Gastrocnemius medialis (tissue), 4 donors: ENCODE measurements at regions of chr7 and their contacts with region 1.

Region 1: GRCh38 chr7:48109848-48110663 is 21.0 kb downstream of the UPP1 start:
- DNase-seq: peak; percentile 42 to 64
- ATAC-seq: peak; percentile 77 to 83
- H3K4me3 ChIP-seq: no peak overlapping the region
- H3K27ac ChIP-seq: no peak overlapping the region
- H3K4me1 ChIP-seq: no peaks in the 10 kb centered on the region
- H3K27me3 ChIP-seq: no peaks in the 10 kb centered on the region
- CTCF ChIP-seq: peak; percentile 90 to 100 (median 95)
- POLR2A ChIP-seq: no peak

Region 2: DNA sequence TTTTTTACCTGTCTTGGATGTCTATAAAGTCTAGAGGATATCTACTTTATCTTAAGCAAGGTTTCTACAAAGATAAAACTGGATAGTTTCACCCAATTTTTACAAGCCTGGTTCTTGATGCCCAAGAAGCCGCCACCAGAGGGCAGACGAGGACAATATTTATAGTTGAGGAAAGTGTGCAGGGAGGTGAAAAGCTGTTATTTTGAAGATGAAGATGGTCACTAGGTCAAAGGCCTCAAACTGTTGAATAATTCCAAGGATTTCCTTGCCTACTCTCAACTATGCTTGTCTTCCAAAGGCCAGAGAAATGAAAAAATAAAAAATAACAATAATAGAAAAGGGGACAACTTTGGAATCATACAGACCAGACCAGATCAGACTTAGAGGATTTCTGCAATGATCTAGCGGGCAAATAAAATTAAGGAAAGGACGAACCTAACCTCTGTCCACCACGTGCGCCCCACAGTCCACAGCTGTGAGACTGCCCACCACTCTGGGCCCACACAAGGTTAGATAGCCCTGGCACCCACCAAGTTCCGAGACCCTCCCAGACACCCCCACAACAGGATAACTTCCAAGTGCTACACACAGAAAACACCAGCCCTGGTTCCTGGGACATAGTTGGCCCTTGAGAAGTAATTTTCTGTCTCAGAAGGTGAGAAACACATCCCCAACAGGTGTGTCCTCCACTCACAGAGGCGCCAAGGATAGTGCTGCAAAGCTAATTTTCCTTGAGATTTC is 164.6 kb before region 1 on chr7:
- in situ Hi-C with region 1: loop called (anchors 5 to 10 kb)
- intact Hi-C with region 1: loop called (anchors 1 kb)
- DNase-seq: peak; percentile 42 to 45
- ATAC-seq: peak in 1 of 2 donors; percentile 49
- H3K4me3 ChIP-seq: no peak overlapping the region
- H3K27ac ChIP-seq: peak overlapping the region; percentile 36 to 68 (median 58)
- H3K4me1 ChIP-seq: peaks cover 0 to 2% of the 10 kb centered on the region in 2 donors
- H3K27me3 ChIP-seq: no peaks in the 10 kb centered on the region
- CTCF ChIP-seq: peak; percentile 48 to 79 (median 64)
- POLR2A ChIP-seq: no peak

Region 3: DNA sequence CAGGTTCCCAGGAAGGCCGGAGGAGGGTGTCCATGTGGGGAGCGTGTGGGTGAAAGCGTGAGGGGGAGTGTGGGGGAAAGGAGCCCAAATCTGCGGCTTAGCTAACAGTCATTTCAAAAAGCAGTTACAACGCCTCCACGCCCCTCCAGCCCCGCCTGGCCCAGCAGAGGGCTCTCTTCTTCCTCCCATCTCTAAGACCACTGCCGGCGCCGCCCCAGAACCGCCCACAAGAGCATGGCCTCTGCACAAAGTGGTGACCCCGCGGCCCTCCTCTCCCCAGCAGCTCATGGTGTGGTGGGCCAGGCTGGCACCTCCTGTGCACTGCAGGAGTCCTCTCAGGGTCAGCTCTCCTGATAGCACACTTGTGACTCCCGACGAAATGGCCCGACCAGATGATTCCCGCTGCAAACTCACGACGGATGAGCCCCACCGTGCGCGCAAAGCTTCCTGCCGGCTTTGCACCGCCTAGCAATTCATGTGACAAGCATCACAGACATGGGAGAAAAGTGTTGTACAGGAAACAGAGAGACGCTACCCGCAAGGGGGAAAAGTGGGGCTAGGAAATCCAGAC is 118.2 kb before region 1 on chr7:
- in situ Hi-C with region 1: loop called in 2 of 4 experiments (anchors 5 kb)
- intact Hi-C with region 1: loop called (anchors 1 kb)
- DNase-seq: peak; percentile 58 to 64
- ATAC-seq: peak; percentile 63 to 75
- H3K4me3 ChIP-seq: peak overlapping the region; percentile 38 to 67 (median 48)
- H3K27ac ChIP-seq: peak overlapping the region in 1 of 4 donors; percentile 15
- H3K4me1 ChIP-seq: no peaks in the 10 kb centered on the region
- H3K27me3 ChIP-seq: peaks cover 0 to 2% (median 0%) of the 10 kb centered on the region in 3 donors
- CTCF ChIP-seq: peak; percentile 18 to 61 (median 49)
- POLR2A ChIP-seq: no peak

Region 4: GRCh38 chr7:48035301-48035966 is 74.6 kb before region 1 on chr7 and contains the start of gene C7orf57:
- in situ Hi-C with region 1: no loop called
- intact Hi-C with region 1: loop called (anchors 1 kb)
- DNase-seq: peak; percentile 74 to 77
- ATAC-seq: peak; percentile 92 to 97
- H3K4me3 ChIP-seq: peak within 1 kb of the TSS; percentile 63 to 77 (median 64)
- H3K27ac ChIP-seq: no peak within 1 kb of the TSS
- H3K4me1 ChIP-seq: peaks cover 4 to 9% of the 10 kb centered on the region in 2 donors
- H3K27me3 ChIP-seq: peaks cover 0 to 8% (median 6%) of the 10 kb centered on the region in 3 donors
- CTCF ChIP-seq: peak in 2 of 5 experiments; percentile 20 to 30
- POLR2A ChIP-seq: no peak
- total RNA-seq, gene C7orf57: not detected

Region 5: DNA sequence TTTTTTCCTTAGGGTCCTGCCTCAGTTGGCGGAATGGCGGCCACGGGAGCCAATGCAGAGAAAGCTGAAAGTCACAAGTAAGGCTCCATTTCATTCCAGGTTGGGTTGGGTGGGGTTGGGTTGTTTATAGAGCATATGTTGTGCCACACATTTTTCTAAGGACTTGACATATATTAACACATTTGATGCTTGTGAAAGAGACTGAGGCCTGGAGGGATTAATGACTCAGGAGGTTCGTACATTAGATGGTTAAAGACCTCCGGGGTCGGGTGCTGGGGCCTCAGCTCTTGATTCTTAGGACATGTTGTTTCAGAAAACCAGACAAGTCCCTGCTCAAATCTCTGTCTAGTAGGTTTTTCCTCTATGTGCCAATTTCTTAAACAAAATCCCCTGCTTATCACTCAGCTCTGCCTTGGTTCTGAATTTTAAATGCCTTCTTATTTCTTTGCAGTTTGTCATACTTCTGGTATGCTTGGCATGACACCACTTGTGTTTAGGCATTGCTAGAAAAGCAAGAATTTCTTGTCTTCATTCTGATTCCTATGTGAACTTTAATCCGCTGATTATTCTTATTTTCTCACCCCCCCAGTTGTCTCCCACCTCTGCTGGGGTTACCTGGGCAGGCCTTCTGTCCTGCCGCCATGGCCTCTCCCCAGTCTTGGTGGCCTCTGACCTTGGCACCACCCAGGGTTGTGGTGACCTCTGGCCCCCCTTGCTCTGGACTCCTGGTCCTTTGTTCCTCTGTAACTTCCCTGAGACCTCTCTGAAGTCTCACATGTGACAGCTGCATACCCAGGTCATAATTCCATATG is 15.1 kb before region 1 on chr7:
- in situ Hi-C with region 1: no loop called
- intact Hi-C with region 1: no loop called
- DNase-seq: no peak
- ATAC-seq: no peak
- H3K4me3 ChIP-seq: no peak overlapping the region
- H3K27ac ChIP-seq: no peak overlapping the region
- H3K4me1 ChIP-seq: no peaks in the 10 kb centered on the region
- H3K27me3 ChIP-seq: no peaks in the 10 kb centered on the region
- CTCF ChIP-seq: no peak
- POLR2A ChIP-seq: no peak